Transverse colon (tissue), 4 donors: ENCODE measurements at regions of chr13 and their contacts with region 1.

Region 1: GRCh38 chr13:113816946-113817859 is 46.7 kb downstream of the GAS6 start:
- DNase-seq: peak; percentile 94
- H3K4me3 ChIP-seq: no peak overlapping the region
- H3K27ac ChIP-seq: peak overlapping the region in 1 of 4 donors; percentile 5
- H3K4me1 ChIP-seq: peaks cover 9 to 24% (median 19%) of the 10 kb centered on the region in 4 donors
- H3K27me3 ChIP-seq: no peaks in the 10 kb centered on the region
- CTCF ChIP-seq: peak; percentile 83 to 94 (median 86)
- EP300 ChIP-seq: no peak
- POLR2A ChIP-seq: no peak

Region 2: DNA sequence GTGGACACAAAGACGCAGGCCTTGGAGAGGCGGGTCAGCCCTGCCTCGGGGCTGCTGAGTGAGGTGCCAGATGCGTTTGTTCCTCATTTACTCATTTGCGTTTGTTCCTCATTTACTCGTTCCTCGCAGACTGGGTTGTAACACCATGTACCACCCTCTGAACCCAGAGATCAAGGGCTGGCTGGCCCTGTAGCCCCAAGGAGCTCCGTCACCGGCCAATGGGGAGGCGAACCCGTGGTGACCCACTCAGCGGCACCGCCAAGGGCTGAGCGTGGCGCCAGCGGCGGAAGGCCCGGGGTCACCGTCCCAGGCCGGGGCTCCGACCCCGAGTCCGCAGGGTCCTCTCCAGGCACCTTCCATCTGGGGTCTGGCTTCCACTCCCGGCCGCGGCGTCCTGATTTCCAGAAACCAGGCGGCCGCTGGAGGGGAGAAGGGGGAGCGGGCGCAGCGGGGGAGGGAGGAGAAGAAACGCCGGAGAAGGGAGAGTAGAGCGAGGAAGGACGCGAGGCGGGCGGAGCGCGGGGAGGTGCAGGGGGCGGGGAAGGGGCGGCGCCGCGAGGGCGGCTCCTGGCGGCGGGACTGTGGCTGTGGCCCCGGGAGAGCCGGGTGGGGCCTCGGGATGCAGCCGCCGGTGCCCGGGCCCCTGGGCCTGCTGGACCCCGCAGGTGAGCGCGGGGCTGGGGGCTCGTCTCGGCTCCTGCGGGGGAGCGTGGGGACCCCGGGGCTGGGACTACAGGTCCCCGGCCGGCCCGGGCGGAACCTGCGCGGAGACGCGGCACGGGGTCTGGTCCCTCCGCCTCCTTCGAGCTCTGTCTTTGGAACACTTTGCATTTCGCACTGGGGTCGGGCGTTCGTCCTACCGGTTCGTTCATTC is 58.3 kb before region 1 on chr13 and contains the start of gene TMEM255B:
- in situ Hi-C with region 1: no loop called
- intact Hi-C with region 1: no loop called
- DNase-seq: peak; percentile 88
- H3K4me3 ChIP-seq: peak within 1 kb of the TSS; percentile 52 to 70 (median 55)
- H3K27ac ChIP-seq: peak within 1 kb of the TSS; percentile 62 to 81 (median 73)
- H3K4me1 ChIP-seq: peaks cover 7 to 16% (median 14%) of the 10 kb centered on the region in 4 donors
- H3K27me3 ChIP-seq: peaks cover 32% of the 10 kb centered on the region
- CTCF ChIP-seq: peak in 4 of 5 experiments; percentile 30 to 56 (median 44)
- EP300 ChIP-seq: no peak
- POLR2A ChIP-seq: peak; percentile 31
- total RNA-seq, gene TMEM255B: 0.79 to 27.7 (median 9.4) TPM

Region 3: GRCh38 chr13:113863436-113864272 is 46.5 kb after region 1 on chr13 and contains the start of gene GAS6:
- in situ Hi-C with region 1: no loop called
- intact Hi-C with region 1: loop called (anchors 1 kb)
- DNase-seq: peak; percentile 80
- H3K4me3 ChIP-seq: peak within 1 kb of the TSS; percentile 38 to 86 (median 70)
- H3K27ac ChIP-seq: peak within 1 kb of the TSS; percentile 77 to 95 (median 89)
- H3K4me1 ChIP-seq: peaks cover 20 to 52% (median 40%) of the 10 kb centered on the region in 4 donors
- H3K27me3 ChIP-seq: peaks cover 9% of the 10 kb centered on the region
- CTCF ChIP-seq: no peak
- EP300 ChIP-seq: no peak
- POLR2A ChIP-seq: no peak
- total RNA-seq, gene GAS6: 152 to 284 (median 169) TPM

Region 4: DNA sequence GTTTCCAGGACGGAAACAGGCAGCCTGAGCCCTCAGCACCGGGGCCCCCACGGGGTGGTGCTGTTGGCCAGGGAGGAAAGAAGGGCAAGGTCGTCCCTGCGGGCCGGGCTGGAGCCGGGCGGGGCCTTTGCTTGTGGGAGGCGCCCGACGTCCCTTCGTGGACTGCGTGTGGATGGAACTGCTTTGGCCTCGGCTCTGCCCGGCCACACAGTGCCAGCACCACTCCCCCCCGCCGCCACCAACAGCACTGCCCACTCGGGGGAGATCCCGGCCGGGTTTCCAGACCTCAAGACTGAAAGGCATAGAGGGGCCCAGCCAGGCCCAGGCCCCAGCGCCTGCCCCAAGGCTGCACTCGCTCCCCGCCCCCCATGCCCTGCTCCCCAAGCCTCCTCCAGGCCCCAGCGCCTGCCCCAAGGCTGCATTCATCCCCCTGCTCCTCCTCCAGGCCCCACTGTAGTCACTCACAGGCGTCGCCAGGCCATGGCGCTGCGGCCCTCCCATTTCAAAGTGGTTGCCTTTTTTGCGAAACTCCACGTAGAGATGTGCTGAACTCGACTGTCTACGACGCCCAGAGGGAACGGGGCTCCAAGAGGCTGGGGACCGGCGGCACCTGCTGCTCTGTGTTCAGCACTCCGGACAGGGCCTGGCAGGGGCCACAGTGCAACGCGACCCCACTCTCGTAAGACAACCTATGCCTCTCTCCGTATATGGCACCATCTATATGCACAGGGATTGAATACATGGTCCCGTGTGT is 134.2 kb after region 1 on chr13:
- in situ Hi-C with region 1: loop called in 1 of 4 experiments (anchors 10 kb)
- intact Hi-C with region 1: loop called (anchors 5 kb)
- DNase-seq: peak; percentile 91
- H3K4me3 ChIP-seq: no peak overlapping the region
- H3K27ac ChIP-seq: no peak overlapping the region
- H3K4me1 ChIP-seq: peaks cover 0 to 11% (median 6%) of the 10 kb centered on the region in 4 donors
- H3K27me3 ChIP-seq: no peaks in the 10 kb centered on the region
- CTCF ChIP-seq: peak; percentile 80 to 94 (median 86)
- EP300 ChIP-seq: no peak
- POLR2A ChIP-seq: no peak

Region 5: GRCh38 chr13:114226699-114227323 is 409.6 kb after region 1 on chr13:
- in situ Hi-C with region 1: no loop called
- intact Hi-C with region 1: loop called (anchors 2 kb)
- DNase-seq: peak; percentile 91
- H3K4me3 ChIP-seq: no peak overlapping the region
- H3K27ac ChIP-seq: no peak overlapping the region
- H3K4me1 ChIP-seq: peaks cover 0 to 8% (median 0%) of the 10 kb centered on the region in 4 donors
- H3K27me3 ChIP-seq: peaks cover 27% of the 10 kb centered on the region
- CTCF ChIP-seq: peak; percentile 96 to 98 (median 97)
- EP300 ChIP-seq: no peak
- POLR2A ChIP-seq: no peak